PC-9 (cell line): ENCODE measurements at regions of chr7 and their contacts with region 1.

Region 1: GRCh38 chr7:10718768-10719167 is 254.9 kb upstream of the PHF14 start:
- DNase-seq: no peak
- H3K4me3 ChIP-seq: no peak overlapping the region
- H3K27ac ChIP-seq: no peak overlapping the region
- H3K4me1 ChIP-seq: no peaks in the 10 kb centered on the region
- H3K27me3 ChIP-seq: no peaks in the 10 kb centered on the region
- CTCF ChIP-seq: no peak

Region 2: GRCh38 chr7:10860516-10860915 is 141.7 kb after region 1 on chr7:
- CTCF ChIA-PET with region 1: no interaction called
- POLR2A ChIA-PET with region 1: no interaction called
- intact Hi-C with region 1: loop called (anchors 10 kb)
- DNase-seq: no peak
- H3K4me3 ChIP-seq: no peak overlapping the region
- H3K27ac ChIP-seq: no peak overlapping the region
- H3K4me1 ChIP-seq: no peaks in the 10 kb centered on the region
- H3K27me3 ChIP-seq: no peaks in the 10 kb centered on the region
- CTCF ChIP-seq: no peak